H1 (cell line): ENCODE measurements at regions of chr15 and their contacts with region 1.

Region 1: GRCh38 chr15:79101866-79102578 is 11.4 kb upstream of the RASGRF1 start:
- DNase-seq: peak in 1 of 2 experiments; percentile 11
- H3K4me3 ChIP-seq: no peak overlapping the region
- H3K27ac ChIP-seq: no peak overlapping the region
- H3K4me1 ChIP-seq: no peaks in the 10 kb centered on the region
- H3K27me3 ChIP-seq: peaks cover 0 to 9% (median 4%) of the 10 kb centered on the region in 4 experiments; a peak in 4 of 7 replicates
- CTCF ChIP-seq: no peak; a peak in 1 of 4 replicates
- EP300 ChIP-seq: no peak
- POLR2A ChIP-seq: no peak
- RAD21 ChIP-seq: peak in 1 of 2 experiments; percentile 27; a peak in 1 of 4 replicates

Region 2: DNA sequence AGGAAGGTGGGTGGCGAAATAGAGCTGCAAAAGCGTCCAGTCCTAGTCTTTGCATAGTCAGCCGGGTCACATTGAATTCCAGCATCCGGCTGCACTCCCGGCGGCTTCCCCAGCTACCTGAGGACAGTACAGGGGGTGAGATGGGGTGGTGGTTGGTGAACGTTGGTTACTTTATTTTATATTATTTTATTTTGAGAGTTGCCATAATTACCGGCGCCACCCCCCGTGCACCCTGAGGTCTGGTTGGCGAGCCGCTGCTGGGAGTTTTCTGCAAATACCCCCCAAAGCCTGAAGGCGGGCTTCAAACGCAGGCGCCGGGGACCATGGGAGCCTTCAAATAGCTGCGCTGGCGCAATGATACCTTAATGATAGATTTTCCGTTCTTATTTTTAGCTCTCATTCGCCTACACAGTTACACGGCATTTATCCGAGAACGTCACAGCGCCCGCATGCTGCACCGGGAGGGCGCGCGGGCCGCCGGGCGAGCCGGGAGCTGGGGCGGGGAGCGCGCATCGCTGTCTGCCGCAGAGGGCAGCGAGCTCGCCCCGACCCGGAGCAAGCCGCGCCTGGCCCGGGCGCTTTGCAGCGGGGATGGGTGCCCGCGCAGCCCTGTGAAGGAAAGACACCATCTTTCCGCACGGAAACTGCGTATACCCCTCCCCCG is 10.7 kb before region 1 on chr15:
- CTCF ChIA-PET with region 1: interaction called, 16 read pairs
- POLR2A ChIA-PET with region 1: no interaction called
- DNase-seq: peak in 1 of 2 experiments; percentile 67
- H3K4me3 ChIP-seq: peak overlapping the region; percentile 43 to 65 (median 46)
- H3K27ac ChIP-seq: no peak overlapping the region
- H3K4me1 ChIP-seq: peaks cover 0 to 19% (median 11%) of the 10 kb centered on the region in 4 experiments; a peak in 6 of 7 replicates
- H3K27me3 ChIP-seq: peaks cover 54 to 81% (median 77%) of the 10 kb centered on the region in 4 experiments
- CTCF ChIP-seq: no peak
- EP300 ChIP-seq: no peak
- POLR2A ChIP-seq: no peak
- RAD21 ChIP-seq: no peak

Region 3: DNA sequence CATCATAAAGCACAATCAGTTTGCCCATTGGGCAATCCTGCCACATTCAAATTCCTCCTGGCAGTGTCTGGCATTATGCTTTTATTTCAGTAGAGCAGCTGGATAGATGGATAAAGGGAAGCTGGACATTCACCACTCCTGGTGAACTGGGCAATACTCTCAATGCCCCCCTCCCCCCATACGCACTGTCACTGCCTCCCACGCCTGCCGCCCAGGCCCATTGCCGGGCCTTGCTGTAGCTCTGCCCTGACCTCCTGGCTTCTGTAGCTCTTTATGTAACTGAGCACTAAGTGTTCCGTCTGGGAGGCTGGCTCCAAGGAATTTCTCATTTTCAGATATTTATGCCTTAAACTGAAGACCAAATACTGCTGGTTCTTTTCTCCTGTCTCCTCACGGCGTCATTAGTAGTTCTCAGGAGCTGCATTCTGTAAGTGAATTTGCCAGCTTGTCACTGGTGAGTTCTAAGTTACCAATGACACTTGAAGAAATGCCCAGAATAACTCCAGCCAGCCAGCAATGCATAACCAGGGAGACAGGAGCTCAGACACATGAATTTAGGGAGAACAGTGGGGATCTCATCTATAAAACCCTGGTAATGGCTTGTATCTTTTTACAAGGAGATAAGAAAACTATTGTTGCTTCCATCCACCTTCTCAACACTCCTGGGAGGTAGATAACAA is 14.1 kb after region 1 on chr15:
- CTCF ChIA-PET with region 1: interaction called, 21 read pairs
- POLR2A ChIA-PET with region 1: no interaction called
- DNase-seq: peak in 1 of 2 experiments; percentile 17
- H3K4me3 ChIP-seq: no peak overlapping the region
- H3K27ac ChIP-seq: no peak overlapping the region
- H3K4me1 ChIP-seq: no peaks in the 10 kb centered on the region
- H3K27me3 ChIP-seq: no peaks in the 10 kb centered on the region; a peak in 1 of 7 replicates
- CTCF ChIP-seq: no peak
- EP300 ChIP-seq: no peak
- POLR2A ChIP-seq: no peak
- RAD21 ChIP-seq: no peak